ENCODE measurements at regions of chr5 and their contacts with region 1.

Region 1: GRCh38 chr5:149551200-149552037 is at the start of gene CSNK1A1:
- DNase-seq: peak; percentile 100
- H3K4me3 Mint-ChIP-seq: peak within 1 kb of the TSS; percentile 89
- H3K27ac Mint-ChIP-seq: peak within 1 kb of the TSS; percentile 99
- H3K4me1 Mint-ChIP-seq: peaks cover 10% of the 10 kb centered on the region
- H3K27me3 Mint-ChIP-seq: no peaks in the 10 kb centered on the region
- CTCF ChIP-seq: peak; percentile 97
- total RNA-seq, gene CSNK1A1: 666 and 744 TPM in 2 replicates

Region 2: GRCh38 chr5:149325166-149325735 is 226.2 kb before region 1 on chr5:
- CTCF ChIA-PET with region 1: interaction called, 3 read pairs
- POLR2A ChIA-PET with region 1: interaction called, 37 read pairs
- intact Hi-C with region 1: no loop called
- DNase-seq: peak; percentile 92
- H3K4me3 Mint-ChIP-seq: no peak overlapping the region
- H3K27ac Mint-ChIP-seq: peak overlapping the region; percentile 96
- H3K4me1 Mint-ChIP-seq: peaks cover 36% of the 10 kb centered on the region
- H3K27me3 Mint-ChIP-seq: no peaks in the 10 kb centered on the region
- CTCF ChIP-seq: no peak

Region 3: DNA sequence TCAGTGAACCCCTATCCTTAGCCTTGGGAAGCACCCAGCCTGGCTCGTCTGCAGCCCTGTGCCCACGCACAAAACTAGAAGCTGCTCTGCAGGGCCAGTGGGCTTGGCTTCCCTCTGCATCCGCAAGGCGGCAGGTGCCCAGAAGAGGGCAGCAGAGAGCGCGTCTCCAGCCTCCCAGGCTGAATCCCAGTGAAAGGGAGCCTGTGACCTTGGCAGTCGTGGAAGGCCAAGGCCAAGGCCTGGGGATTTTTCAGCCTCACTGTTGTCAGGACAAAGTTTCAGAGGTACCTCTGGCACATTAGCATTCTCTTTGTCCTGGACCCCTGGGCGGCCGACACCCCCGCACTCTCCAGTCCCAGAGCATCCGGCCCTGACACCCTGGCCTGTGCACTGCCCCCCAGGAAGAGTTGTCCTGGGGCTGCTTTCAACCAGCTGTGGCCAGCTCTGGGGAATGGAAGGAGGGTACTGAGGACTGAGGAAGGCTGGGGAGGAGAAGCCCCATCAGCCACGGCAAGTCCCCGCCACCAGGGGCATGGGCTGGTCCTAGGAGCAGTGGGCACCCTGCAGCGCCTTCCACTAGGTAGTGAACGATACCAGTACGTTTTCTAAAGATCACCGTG is 108.7 kb before region 1 on chr5:
- CTCF ChIA-PET with region 1: interaction called, 202 read pairs
- POLR2A ChIA-PET with region 1: interaction called, 192 read pairs
- intact Hi-C with region 1: loop called (anchors 1 kb)
- DNase-seq: peak; percentile 88
- H3K4me3 Mint-ChIP-seq: peak overlapping the region; percentile 41
- H3K27ac Mint-ChIP-seq: peak overlapping the region; percentile 84
- H3K4me1 Mint-ChIP-seq: peaks cover 65% of the 10 kb centered on the region
- H3K27me3 Mint-ChIP-seq: no peaks in the 10 kb centered on the region
- CTCF ChIP-seq: peak; percentile 96

Region 4: DNA sequence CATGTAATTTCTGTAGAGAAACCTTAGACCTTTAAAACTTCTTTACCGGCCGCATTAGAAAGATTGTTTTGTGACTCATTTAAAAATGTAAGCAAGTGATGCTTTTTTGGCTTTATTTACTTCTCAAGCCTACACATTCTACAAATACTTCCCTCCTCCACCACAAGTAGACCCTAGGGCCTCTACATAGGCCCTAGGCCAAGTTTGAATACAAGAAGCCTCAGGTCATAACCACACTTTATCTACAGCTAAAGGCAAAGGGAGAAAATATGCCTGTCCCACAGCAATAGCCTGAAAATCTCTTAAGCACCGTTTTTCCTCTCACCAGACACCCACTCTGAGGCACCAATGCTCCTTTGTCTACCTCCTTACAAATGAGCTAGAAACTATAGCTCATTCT is 54.1 kb before region 1 on chr5:
- CTCF ChIA-PET with region 1: interaction called, 7 read pairs
- POLR2A ChIA-PET with region 1: interaction called, 38 read pairs
- intact Hi-C with region 1: no loop called
- DNase-seq: no peak
- H3K4me3 Mint-ChIP-seq: no peak overlapping the region
- H3K27ac Mint-ChIP-seq: peak overlapping the region; percentile 14
- H3K4me1 Mint-ChIP-seq: no peaks in the 10 kb centered on the region
- H3K27me3 Mint-ChIP-seq: no peaks in the 10 kb centered on the region
- CTCF ChIP-seq: no peak

Region 5: DNA sequence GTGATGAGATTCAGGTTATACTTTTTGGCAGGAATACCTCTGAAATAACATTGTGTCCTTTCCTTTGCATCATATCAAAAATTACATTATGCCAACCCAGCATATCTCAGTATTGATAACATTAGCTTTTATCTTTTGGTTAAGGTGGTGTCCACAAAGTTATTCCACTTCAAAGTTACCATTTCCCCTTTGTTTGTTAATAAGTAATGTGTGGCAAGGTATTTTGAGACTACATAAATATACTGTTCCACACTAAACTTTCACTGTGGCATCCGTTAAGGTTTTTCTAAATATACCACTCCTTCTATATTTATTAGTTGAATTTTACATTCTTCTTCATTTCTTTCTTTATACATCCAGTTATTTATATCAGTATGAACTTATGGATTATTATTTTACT is 15.8 kb after region 1 on chr5:
- CTCF ChIA-PET with region 1: interaction called, 109 read pairs
- POLR2A ChIA-PET with region 1: interaction called, 517 read pairs
- intact Hi-C with region 1: no loop called
- DNase-seq: no peak
- H3K4me3 Mint-ChIP-seq: no peak overlapping the region
- H3K27ac Mint-ChIP-seq: no peak overlapping the region
- H3K4me1 Mint-ChIP-seq: peaks cover 20% of the 10 kb centered on the region
- H3K27me3 Mint-ChIP-seq: no peaks in the 10 kb centered on the region
- CTCF ChIP-seq: no peak

Region 6: GRCh38 chr5:149618581-149619251 is 67.3 kb after region 1 on chr5:
- CTCF ChIA-PET with region 1: interaction called, 40 read pairs
- POLR2A ChIA-PET with region 1: interaction called, 56 read pairs
- intact Hi-C with region 1: no loop called
- DNase-seq: peak; percentile 86
- H3K4me3 Mint-ChIP-seq: no peak overlapping the region
- H3K27ac Mint-ChIP-seq: peak overlapping the region; percentile 28
- H3K4me1 Mint-ChIP-seq: peaks cover 16% of the 10 kb centered on the region
- H3K27me3 Mint-ChIP-seq: no peaks in the 10 kb centered on the region
- CTCF ChIP-seq: peak; percentile 92